ENCODE measurements at regions of chr2 and their contacts with region 1.

Region 1: DNA sequence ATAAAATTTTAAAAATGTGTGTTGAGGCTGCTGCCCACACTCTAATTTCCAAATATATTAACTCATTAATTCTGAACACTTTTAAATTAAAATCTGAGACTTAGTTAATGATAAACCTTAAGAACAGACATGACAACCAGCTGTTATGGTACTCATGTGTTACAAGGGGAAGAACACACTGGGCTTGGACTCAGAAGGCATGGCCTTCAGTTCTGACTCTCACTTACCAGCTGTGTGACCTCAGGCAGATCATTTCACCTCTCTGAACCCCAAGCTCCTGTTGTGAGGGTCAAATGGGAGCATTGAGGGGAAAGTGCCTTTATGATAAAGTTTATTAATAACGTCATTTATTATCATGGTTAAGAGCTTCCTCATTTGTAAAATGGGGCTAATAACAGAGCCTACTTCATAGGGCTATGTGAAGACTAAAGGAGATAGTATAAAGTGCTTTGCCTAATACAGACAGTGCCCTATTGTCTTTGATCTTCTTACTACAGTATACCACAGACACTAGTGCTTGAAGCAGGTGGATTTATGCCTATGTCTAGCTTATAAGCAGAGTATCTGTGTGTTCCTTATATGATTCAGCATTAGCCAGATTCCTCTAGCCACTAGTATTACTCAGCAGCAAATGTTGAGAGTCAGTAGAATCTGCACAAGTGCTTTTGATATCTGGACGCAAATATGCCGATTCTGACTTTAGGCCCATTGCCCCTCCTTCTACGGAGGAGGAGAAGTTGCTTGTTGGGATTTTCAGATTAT is 99.6 kb downstream of the SGPP2 start:
- DNase-seq: no peak
- H3K4me3 ChIP-seq: no peak overlapping the region
- H3K27ac ChIP-seq: no peak overlapping the region
- H3K4me1 ChIP-seq: no peaks in the 10 kb centered on the region
- H3K27me3 ChIP-seq: no peaks in the 10 kb centered on the region
- CTCF ChIP-seq: no peak

Region 2: GRCh38 chr2:222214885-222215284 is 309.1 kb before region 1 on chr2:
- intact Hi-C with region 1: loop called (anchors 5 kb)
- DNase-seq: no peak
- H3K4me3 ChIP-seq: no peak overlapping the region
- H3K27ac ChIP-seq: no peak overlapping the region
- H3K4me1 ChIP-seq: no peaks in the 10 kb centered on the region
- H3K27me3 ChIP-seq: no peaks in the 10 kb centered on the region
- CTCF ChIP-seq: no peak

Region 3: DNA sequence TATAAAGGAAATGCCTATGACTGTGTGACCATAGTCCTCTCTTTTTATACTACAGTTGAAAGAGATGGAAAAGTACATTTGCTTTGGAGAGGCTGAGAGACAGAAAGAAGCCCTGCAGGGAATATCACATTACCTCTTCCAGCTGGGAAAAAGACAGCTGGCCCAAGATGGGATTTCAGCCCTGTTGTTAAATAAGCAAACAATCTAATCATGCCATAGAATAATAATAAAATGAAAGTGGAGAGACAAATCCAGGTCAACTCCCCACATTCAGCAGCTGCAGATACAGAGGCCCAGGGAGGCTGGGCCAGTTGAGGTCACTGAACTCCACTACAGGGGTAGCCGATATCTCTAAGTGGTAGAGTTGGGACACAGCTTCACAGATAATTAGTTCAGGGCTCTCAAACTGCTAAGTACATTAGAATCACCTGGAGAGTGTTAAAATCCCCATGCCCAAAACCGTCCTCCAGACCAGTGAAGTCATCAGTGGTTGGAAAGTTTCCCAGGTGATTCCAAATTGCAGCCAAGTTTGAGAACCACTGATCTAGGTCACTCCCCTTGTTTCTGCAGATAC is 229.4 kb after region 1 on chr2:
- intact Hi-C with region 1: no loop called
- DNase-seq: no peak
- H3K4me3 ChIP-seq: no peak overlapping the region
- H3K27ac ChIP-seq: peak overlapping the region; percentile 49 to 66
- H3K4me1 ChIP-seq: peaks cover 0 to 22% (median 14%) of the 10 kb centered on the region in 4 donors
- H3K27me3 ChIP-seq: no peaks in the 10 kb centered on the region
- CTCF ChIP-seq: no peak

Measured in tibial artery (tissue), 4 donors.